ENCODE measurements at regions of chrX and their contacts with region 1.

Region 1: DNA sequence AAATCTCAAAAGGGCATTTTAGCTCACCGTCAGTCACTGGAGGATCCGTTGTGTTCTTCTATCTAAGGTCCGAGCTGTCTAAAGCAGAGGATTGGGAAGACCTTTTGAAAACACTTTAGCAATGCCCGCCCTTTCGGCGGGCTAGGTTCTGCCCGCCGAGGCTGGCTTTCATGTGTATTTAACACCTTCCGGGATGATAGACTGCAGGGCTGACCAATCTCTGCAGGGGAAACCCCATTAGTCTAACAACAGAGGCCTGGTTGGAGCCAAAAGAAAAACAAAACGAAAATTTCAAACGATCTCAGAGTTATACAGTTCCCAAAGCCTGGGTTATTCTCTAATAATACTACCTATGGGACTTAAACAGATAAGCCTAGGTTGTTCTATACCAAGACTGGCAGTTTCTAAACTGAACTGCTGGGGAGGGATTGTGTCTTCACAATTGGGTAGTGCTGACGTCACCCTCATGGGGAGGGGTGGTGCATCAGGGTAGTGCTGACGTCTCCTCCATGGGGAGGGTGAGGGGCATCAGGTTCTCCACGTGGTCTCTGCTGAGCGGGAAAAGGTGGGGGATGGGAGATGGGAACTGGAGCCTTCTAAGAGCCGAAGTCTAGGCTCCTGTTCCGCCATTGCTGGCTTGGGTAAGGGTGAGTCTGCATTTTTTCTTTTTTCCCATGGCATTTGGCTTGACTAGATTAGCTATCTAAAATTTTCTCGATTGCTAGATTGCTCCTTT is 14.8 kb upstream of the CUL4B start:
- DNase-seq: no peak
- H3K4me3 ChIP-seq: no peak overlapping the region
- H3K27ac ChIP-seq: no peak overlapping the region
- H3K4me1 ChIP-seq: no peaks in the 10 kb centered on the region
- H3K27me3 ChIP-seq: no peaks in the 10 kb centered on the region
- CTCF ChIP-seq: no peak
- EP300 ChIP-seq: no peak
- POLR2A ChIP-seq: no peak

Region 2: DNA sequence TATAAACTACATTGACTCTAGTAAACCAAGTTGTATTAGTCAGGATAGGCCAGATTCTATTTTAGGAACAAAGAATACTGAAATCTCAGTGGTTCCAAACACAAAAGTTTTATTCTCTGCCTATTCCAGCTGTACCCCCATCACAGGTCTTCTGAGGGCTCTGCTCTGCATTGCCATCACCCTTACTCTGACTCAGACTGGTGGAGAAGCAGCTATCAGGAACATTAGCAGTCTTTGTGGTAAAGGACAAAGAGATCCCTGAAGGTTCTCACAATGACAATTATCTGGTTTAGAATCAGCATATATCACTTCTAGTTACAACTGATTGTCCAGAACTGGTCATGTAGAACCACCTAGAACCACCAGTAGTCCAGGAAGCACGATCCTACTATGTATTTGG is 723.0 kb after region 1 on chrX:
- in situ Hi-C with region 1: no loop called
- intact Hi-C with region 1: loop called (anchors 5 kb)
- DNase-seq: no peak
- H3K4me3 ChIP-seq: no peak overlapping the region
- H3K27ac ChIP-seq: no peak overlapping the region
- H3K4me1 ChIP-seq: no peaks in the 10 kb centered on the region
- H3K27me3 ChIP-seq: no peaks in the 10 kb centered on the region
- CTCF ChIP-seq: no peak
- EP300 ChIP-seq: no peak
- POLR2A ChIP-seq: no peak